CD4-positive, alpha-beta memory T cell (primary cell): ENCODE measurements at regions of chr18 and their contacts with region 1.

Region 1: DNA sequence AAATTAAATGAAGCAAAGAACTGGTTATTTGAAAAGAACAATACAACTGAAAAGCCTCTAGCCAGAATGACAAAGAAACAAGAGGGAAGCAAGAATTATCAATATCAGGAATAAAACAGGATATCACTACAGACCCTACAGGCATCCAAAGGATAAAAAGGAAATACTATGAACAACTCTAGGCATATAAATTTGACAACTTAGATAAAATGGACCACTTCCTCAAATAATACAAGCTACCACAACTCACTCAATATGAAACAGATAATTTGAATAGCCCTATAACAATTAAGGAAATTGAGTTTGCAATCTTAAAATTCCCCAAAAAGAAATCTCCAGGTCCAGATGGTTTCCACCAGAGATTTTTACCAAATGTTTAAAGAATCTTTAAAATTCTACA is 19.8 kb downstream of the RPRD1A start:
- DNase-seq: no peak
- H3K4me3 ChIP-seq: no peak overlapping the region
- H3K4me3 Mint-ChIP-seq: no peak overlapping the region
- H3K27ac ChIP-seq: no peak overlapping the region
- H3K27ac Mint-ChIP-seq: peak overlapping the region in 1 of 7 donors; percentile 7
- H3K4me1 ChIP-seq: peaks cover 15% of the 10 kb centered on the region
- H3K4me1 Mint-ChIP-seq: peaks cover 39 to 64% (median 49%) of the 10 kb centered on the region in 4 donors
- H3K27me3 ChIP-seq: no peaks in the 10 kb centered on the region
- H3K27me3 Mint-ChIP-seq: no peaks in the 10 kb centered on the region

Region 2: GRCh38 chr18:36035253-36035652 is 12.3 kb before region 1 on chr18:
- CTCF ChIA-PET with region 1: no interaction called
- POLR2A ChIA-PET with region 1: interaction called, 3 read pairs
- intact Hi-C with region 1: loop called (anchors 2 kb)
- DNase-seq: no peak
- H3K4me3 ChIP-seq: no peak overlapping the region
- H3K4me3 Mint-ChIP-seq: peak overlapping the region in 1 of 8 donors; percentile 45
- H3K27ac ChIP-seq: no peak overlapping the region
- H3K27ac Mint-ChIP-seq: peak overlapping the region in 2 of 7 donors; percentile 4 to 14
- H3K4me1 ChIP-seq: peaks cover 14% of the 10 kb centered on the region
- H3K4me1 Mint-ChIP-seq: peaks cover 23 to 49% (median 38%) of the 10 kb centered on the region in 4 donors
- H3K27me3 ChIP-seq: no peaks in the 10 kb centered on the region
- H3K27me3 Mint-ChIP-seq: no peaks in the 10 kb centered on the region